ENCODE measurements at regions of chr15 and their contacts with region 1.

Region 1: DNA sequence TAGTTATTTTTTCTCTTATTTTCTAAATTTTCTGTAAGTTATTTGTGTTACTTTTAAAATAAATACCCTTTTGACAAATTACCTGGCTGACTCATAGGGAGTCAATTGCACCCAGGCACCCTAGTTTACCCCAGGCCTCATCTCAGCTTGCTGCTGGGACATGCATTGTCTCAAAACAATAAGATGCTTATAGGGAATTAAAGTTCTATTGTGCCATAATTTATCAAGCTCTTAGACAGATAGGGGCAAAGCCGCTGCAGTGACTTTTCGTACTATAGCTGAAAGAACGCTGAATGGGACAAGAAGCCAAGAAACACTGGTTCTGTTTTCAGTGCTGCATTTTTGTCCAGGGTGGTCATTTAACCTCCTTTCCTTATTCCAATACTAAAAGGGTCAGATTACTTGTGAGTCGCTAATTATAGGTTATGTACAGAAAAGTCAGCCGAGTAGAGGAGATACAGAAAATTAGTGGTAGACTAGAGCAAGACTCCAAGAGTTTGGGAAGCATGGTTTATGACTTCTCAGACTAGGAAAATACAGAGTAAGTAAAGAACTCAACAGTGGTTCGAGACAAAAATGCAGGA is 50.3 kb downstream of the EXD1 start:
- DNase-seq: no peak
- ATAC-seq: no peak
- H3K4me3 ChIP-seq: no peak overlapping the region
- H3K27ac ChIP-seq: no peak overlapping the region
- H3K4me1 ChIP-seq: no peaks in the 10 kb centered on the region
- H3K27me3 ChIP-seq: peaks cover 0 to 1% of the 10 kb centered on the region in 2 experiments; a peak in 1 of 5 replicates
- CTCF ChIP-seq: no peak
- EP300 ChIP-seq: no peak
- POLR2A ChIP-seq: no peak
- RAD21 ChIP-seq: no peak

Region 2: DNA sequence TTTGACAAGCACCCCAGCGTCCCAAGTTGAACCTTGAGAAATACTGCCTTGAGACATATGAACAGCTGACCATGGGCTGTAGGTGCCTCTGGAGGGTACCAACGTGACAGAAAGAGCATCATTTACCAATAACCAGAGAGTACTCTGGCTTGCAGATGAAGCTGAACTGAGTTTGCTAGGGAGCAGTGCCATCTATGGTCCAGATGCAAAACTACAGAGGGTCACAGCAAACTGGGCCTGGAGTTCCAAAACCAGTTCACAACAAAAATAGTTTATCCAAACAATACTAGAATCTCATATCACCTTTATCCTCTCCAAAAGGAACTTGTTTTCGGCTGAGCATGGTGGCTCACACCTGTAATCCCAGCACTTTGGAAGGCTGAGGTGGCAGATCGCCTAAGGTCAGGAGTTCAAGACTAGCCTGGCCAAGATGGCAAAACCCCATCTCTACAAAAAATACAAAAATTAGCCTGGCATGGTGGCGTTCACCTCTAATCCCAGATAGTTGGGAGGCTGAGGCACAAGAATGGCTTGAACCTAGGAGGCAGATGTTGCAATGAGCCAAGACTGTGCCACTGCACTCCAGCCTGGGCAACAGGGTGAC is 157.7 kb before region 1 on chr15:
- CTCF ChIA-PET with region 1: no interaction called
- POLR2A ChIA-PET with region 1: no interaction called
- in situ Hi-C with region 1: no loop called
- intact Hi-C with region 1: loop called (anchors 10 kb)
- DNase-seq: peak; percentile 28
- ATAC-seq: peak; percentile 71
- H3K4me3 ChIP-seq: no peak overlapping the region
- H3K27ac ChIP-seq: no peak overlapping the region
- H3K4me1 ChIP-seq: peaks cover 34% of the 10 kb centered on the region
- H3K27me3 ChIP-seq: no peaks in the 10 kb centered on the region
- CTCF ChIP-seq: peak; percentile 83
- EP300 ChIP-seq: no peak
- POLR2A ChIP-seq: no peak
- RAD21 ChIP-seq: peak; percentile 60; the same call in 1 of the 2 replicates

Measured in HepG2 (cell line).